CD8-positive, alpha-beta memory T cell (primary cell): ENCODE measurements at regions of chr11 and their contacts with region 1.

Region 1: DNA sequence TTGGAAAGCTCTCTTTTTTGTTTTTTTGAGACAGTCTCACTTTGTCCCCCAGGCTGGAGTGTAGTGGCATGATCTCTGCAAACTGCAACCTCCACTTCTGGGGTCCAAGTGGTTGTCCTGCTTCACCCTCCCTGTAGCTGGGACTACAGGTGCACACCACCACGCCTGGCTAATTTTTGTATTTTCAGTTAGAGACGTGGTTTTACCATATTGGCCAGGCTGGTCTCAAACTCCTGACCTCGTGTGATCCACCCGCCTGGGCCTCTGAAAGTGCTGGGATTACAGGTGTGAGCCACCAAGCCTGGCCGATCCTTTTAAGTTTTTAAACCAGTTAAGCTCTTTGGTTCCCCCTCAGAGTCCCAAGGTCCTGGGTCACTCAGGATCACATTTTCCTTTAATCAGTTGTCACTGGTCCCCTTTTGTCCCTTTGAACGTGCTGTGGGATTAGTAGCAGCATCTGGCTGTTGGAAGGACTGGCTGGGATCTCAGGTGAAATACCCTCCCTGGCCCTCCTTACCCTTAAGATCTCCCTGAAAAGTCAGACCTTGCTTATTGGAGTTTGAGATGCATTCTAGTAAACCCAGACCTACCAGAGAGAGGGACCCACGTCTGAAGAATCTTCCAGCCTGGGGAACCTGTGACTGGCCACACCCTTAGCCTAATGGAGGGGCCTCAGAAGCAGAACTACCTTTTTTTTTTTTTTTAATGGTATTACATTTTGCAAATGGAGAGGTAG is 8.1 kb downstream of the MALAT1 start:
- DNase-seq: peak in 2 of 5 donors; percentile 30 to 58
- H3K4me3 ChIP-seq: peak overlapping the region; percentile 97
- H3K4me3 Mint-ChIP-seq: peak overlapping the region in 1 of 7 donors; percentile 59
- H3K27ac ChIP-seq: peak overlapping the region; percentile 50
- H3K27ac Mint-ChIP-seq: peak overlapping the region in 7 of 8 donors; percentile 65 to 92 (median 86)
- H3K4me1 ChIP-seq: peaks cover 43% of the 10 kb centered on the region
- H3K4me1 Mint-ChIP-seq: peaks cover 52 to 56% (median 53%) of the 10 kb centered on the region in 3 donors
- H3K27me3 ChIP-seq: no peaks in the 10 kb centered on the region
- H3K27me3 Mint-ChIP-seq: no peaks in the 10 kb centered on the region

Region 2: DNA sequence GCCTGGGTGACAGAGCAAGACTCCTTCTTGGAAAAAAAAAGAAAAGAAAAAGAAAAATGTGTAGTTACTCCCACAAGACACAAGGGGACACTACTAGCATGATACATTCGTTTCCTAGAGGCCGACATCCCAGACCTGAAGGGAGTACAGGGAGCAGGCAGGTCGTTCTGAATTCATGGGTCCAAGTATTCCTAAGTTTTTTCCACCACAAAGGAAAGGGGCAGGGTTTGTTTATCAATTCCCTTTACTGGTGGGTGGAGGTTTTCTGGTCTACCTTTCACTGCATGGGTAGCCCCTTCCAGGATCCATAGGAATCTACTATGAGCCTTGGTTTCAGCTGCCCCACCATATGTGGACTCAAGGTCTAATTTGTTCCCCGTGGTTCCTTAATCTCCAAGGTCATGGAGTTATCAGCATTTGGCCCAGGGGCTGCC is 140.6 kb before region 1 on chr11:
- CTCF ChIA-PET with region 1: interaction called, 18 read pairs
- POLR2A ChIA-PET with region 1: no interaction called
- DNase-seq: peak in 4 of 5 donors; percentile 22 to 61 (median 60)
- H3K4me3 ChIP-seq: no peak overlapping the region
- H3K4me3 Mint-ChIP-seq: no peak overlapping the region
- H3K27ac ChIP-seq: no peak overlapping the region
- H3K27ac Mint-ChIP-seq: no peak overlapping the region
- H3K4me1 ChIP-seq: no peaks in the 10 kb centered on the region
- H3K4me1 Mint-ChIP-seq: peaks cover 0 to 7% (median 0%) of the 10 kb centered on the region in 3 donors
- H3K27me3 ChIP-seq: no peaks in the 10 kb centered on the region
- H3K27me3 Mint-ChIP-seq: no peaks in the 10 kb centered on the region

Region 3: DNA sequence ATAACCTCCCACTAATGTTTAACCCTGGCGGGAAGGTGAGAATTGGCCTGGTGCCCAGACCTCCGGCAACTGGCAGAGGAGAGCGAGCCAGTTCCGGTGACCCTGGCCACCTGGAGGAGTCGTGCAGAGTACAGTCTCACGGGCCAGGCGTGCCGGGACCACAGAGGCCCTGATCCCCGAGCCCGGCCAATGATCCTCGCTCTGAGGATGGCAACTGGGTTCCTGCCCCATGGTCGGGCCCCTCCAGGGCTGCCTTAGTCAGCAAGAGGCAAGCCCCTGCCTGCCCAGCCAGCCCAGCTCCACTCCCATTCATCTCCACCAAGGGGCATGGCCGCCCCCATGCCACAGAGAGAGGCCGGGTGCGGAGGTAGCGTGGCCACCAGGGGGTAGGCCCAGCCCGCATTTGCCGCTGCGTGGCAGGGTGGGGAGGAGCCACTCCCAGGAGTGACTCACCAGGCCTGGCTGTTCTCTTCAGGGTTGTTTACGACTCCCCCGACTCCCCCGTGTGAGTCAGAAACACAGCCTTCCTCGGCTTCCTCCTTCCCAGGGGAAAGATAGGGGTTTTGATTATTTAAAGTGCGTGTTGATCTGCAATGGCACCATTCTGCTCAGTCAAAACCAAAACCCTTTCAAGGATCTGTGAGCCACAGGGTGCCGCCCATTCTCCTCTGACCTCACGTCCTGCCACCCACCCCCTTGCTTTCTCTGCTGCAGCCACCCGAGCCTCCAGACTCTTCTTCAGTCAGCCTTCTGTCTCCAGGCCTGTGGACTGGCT is 124.7 kb before region 1 on chr11 and contains the start of gene SLC25A45:
- CTCF ChIA-PET with region 1: interaction called, 51 read pairs
- POLR2A ChIA-PET with region 1: interaction called, 10 read pairs
- DNase-seq: peak; percentile 84 to 96 (median 87)
- H3K4me3 ChIP-seq: peak within 1 kb of the TSS; percentile 91
- H3K4me3 Mint-ChIP-seq: peak within 1 kb of the TSS; percentile 83 to 94 (median 91)
- H3K27ac ChIP-seq: peak within 1 kb of the TSS; percentile 96
- H3K27ac Mint-ChIP-seq: peak within 1 kb of the TSS; percentile 97 to 100 (median 99)
- H3K4me1 ChIP-seq: peaks cover 54% of the 10 kb centered on the region
- H3K4me1 Mint-ChIP-seq: peaks cover 45 to 61% (median 47%) of the 10 kb centered on the region in 3 donors
- H3K27me3 ChIP-seq: no peaks in the 10 kb centered on the region
- H3K27me3 Mint-ChIP-seq: no peaks in the 10 kb centered on the region
- total RNA-seq, gene SLC25A45: 13.3 to 13.8 TPM

Region 4: DNA sequence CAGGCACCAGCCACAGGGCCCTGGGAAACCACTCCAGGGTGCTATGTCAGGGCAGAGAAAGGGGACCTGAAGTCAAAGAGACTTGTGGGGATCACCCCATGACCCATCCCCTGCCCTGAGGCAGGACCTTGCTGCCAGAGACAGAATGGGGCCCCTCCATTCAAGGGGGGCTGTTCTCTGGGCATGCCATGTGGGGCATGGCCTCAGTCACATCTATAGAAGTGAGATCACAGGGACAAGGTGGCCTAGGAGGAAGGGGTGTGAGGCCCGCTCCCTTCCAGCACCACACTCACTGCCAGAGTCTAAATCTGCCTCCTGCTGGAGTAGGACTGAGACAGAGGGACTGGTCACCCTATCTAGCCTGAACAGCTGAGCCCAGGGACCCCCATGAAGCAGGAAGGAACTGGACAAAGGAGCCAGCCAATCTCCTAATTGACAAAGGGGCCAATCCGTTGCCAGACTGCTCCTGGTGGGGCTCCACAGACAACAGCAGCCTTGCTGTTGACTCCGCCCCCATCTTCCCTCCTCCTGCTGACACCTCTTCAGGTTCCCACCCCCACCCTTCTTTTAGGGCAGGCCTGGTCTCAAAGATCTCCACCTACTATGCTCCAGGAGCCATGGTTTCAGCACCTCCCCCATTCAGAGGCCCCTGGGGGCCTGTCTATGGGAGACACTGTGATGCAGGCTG is 58.4 kb before region 1 on chr11:
- CTCF ChIA-PET with region 1: no interaction called
- POLR2A ChIA-PET with region 1: no interaction called
- DNase-seq: peak in 1 of 5 donors; percentile 33
- H3K4me3 ChIP-seq: no peak overlapping the region
- H3K4me3 Mint-ChIP-seq: no peak overlapping the region
- H3K27ac ChIP-seq: no peak overlapping the region
- H3K27ac Mint-ChIP-seq: peak overlapping the region in 6 of 8 donors; percentile 42 to 96 (median 51)
- H3K4me1 ChIP-seq: no peaks in the 10 kb centered on the region
- H3K4me1 Mint-ChIP-seq: peaks cover 7 to 14% (median 14%) of the 10 kb centered on the region in 3 donors
- H3K27me3 ChIP-seq: no peaks in the 10 kb centered on the region
- H3K27me3 Mint-ChIP-seq: no peaks in the 10 kb centered on the region

Region 5: DNA sequence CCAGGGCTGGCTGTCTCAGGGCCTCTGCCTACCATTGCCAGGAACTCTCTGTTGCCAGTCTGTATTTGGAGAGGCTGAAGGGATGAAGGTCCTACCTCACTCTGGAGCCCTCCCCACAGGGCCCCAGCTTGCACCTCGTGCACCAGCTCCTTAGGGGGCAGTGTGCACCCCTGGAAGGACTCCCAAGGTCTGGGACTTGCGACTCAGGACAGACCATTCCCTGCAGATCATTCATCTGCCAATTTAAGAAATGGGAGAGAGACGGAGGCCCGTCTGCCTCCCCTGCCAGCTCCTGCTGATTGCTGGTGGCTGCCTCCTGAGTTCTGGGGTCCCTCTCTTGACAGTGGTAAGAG is 35.6 kb before region 1 on chr11:
- CTCF ChIA-PET with region 1: interaction called, 11 read pairs
- POLR2A ChIA-PET with region 1: interaction called, 48 read pairs
- DNase-seq: peak in 1 of 5 donors; percentile 21
- H3K4me3 ChIP-seq: peak overlapping the region; percentile 25
- H3K4me3 Mint-ChIP-seq: peak overlapping the region in 1 of 7 donors; percentile 73
- H3K27ac ChIP-seq: peak overlapping the region; percentile 73
- H3K27ac Mint-ChIP-seq: peak overlapping the region; percentile 96 to 99 (median 98)
- H3K4me1 ChIP-seq: peaks cover 21% of the 10 kb centered on the region
- H3K4me1 Mint-ChIP-seq: peaks cover 16 to 33% (median 20%) of the 10 kb centered on the region in 3 donors
- H3K27me3 ChIP-seq: no peaks in the 10 kb centered on the region
- H3K27me3 Mint-ChIP-seq: no peaks in the 10 kb centered on the region

Region 6: DNA sequence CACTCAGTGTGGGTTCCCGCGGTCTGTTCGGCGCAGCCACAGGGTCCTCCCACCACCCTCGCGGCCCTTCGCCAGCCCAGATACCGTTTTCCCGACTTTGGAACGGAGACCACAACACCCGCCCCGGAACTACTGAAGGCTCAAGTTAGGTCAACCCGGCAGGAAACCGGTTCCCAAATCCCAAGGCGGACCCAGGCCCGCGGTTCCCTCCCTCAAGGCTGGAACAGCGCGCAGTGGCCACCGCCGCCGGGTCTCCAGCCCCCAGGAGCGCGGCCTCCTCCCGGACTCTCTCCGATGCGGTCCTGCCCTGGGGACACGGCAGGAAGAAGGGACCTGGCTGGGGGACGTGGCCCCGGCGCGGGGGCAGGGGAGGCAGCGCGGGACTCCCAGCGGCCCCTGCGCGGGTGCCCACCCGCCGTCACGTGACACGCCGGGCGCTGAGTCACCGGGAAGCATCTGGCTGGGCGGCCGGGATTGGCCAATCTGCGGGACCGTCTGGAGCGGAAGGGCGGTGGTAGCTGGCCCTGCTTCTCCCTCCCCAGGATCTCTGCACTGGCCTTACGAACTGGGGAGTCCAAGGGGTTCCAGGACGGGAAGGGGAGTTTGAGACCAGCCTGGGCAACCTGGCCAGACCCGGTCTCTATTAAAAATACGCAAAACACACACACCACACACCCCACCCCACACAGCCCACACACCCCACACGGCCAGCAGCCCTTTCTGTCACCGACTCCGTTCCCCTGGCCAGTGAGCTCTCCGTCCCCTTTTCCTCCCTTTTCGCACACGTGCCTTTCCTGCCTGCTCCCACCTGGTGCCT is 29.6 kb before region 1 on chr11:
- CTCF ChIA-PET with region 1: interaction called, 11 read pairs
- POLR2A ChIA-PET with region 1: interaction called, 48 read pairs
- DNase-seq: peak; percentile 82 to 94 (median 86)
- H3K4me3 ChIP-seq: peak overlapping the region; percentile 86
- H3K4me3 Mint-ChIP-seq: peak overlapping the region; percentile 90 to 100 (median 97)
- H3K27ac ChIP-seq: peak overlapping the region; percentile 98
- H3K27ac Mint-ChIP-seq: peak overlapping the region; percentile 96 to 100 (median 100)
- H3K4me1 ChIP-seq: peaks cover 12% of the 10 kb centered on the region
- H3K4me1 Mint-ChIP-seq: peaks cover 12 to 27% (median 14%) of the 10 kb centered on the region in 3 donors
- H3K27me3 ChIP-seq: no peaks in the 10 kb centered on the region
- H3K27me3 Mint-ChIP-seq: no peaks in the 10 kb centered on the region

Region 7: GRCh38 chr11:65487413-65488272 is 19.3 kb before region 1 on chr11:
- CTCF ChIA-PET with region 1: interaction called, 3 read pairs
- POLR2A ChIA-PET with region 1: interaction called, 10 read pairs
- DNase-seq: no peak
- H3K4me3 ChIP-seq: no peak overlapping the region
- H3K4me3 Mint-ChIP-seq: no peak overlapping the region
- H3K27ac ChIP-seq: no peak overlapping the region
- H3K27ac Mint-ChIP-seq: peak overlapping the region in 1 of 8 donors; percentile 29
- H3K4me1 ChIP-seq: no peaks in the 10 kb centered on the region
- H3K4me1 Mint-ChIP-seq: peaks cover 0 to 3% (median 2%) of the 10 kb centered on the region in 3 donors
- H3K27me3 ChIP-seq: no peaks in the 10 kb centered on the region
- H3K27me3 Mint-ChIP-seq: peaks cover 0 to 3% of the 10 kb centered on the region in 2 donors

Region 8: GRCh38 chr11:65524741-65525545 is 18.0 kb after region 1 on chr11 and contains the start of gene SCYL1:
- CTCF ChIA-PET with region 1: interaction called, 10 read pairs
- POLR2A ChIA-PET with region 1: interaction called, 13 read pairs
- DNase-seq: peak; percentile 72 to 88 (median 76)
- H3K4me3 ChIP-seq: peak within 1 kb of the TSS; percentile 75
- H3K4me3 Mint-ChIP-seq: peak within 1 kb of the TSS; percentile 81 to 91 (median 85)
- H3K27ac ChIP-seq: peak within 1 kb of the TSS; percentile 76
- H3K27ac Mint-ChIP-seq: peak within 1 kb of the TSS; percentile 73 to 97 (median 92)
- H3K4me1 ChIP-seq: peaks cover 52% of the 10 kb centered on the region
- H3K4me1 Mint-ChIP-seq: peaks cover 45 to 62% (median 46%) of the 10 kb centered on the region in 3 donors
- H3K27me3 ChIP-seq: no peaks in the 10 kb centered on the region
- H3K27me3 Mint-ChIP-seq: peaks cover 0 to 1% of the 10 kb centered on the region in 2 donors
- total RNA-seq, gene SCYL1: 85.1 to 88.5 TPM

Region 9: GRCh38 chr11:65558002-65558931 is 51.3 kb after region 1 on chr11 and contains the start of gene LTBP3:
- CTCF ChIA-PET with region 1: no interaction called
- POLR2A ChIA-PET with region 1: no interaction called
- DNase-seq: peak in 4 of 5 donors; percentile 32 to 63 (median 40)
- H3K4me3 ChIP-seq: peak within 1 kb of the TSS; percentile 53
- H3K4me3 Mint-ChIP-seq: peak within 1 kb of the TSS; percentile 80 to 94 (median 91)
- H3K27ac ChIP-seq: peak within 1 kb of the TSS; percentile 54
- H3K27ac Mint-ChIP-seq: peak within 1 kb of the TSS; percentile 84 to 97 (median 94)
- H3K4me1 ChIP-seq: peaks cover 59% of the 10 kb centered on the region
- H3K4me1 Mint-ChIP-seq: peaks cover 37 to 62% (median 44%) of the 10 kb centered on the region in 3 donors
- H3K27me3 ChIP-seq: no peaks in the 10 kb centered on the region
- H3K27me3 Mint-ChIP-seq: peaks cover 0 to 3% of the 10 kb centered on the region in 2 donors
- total RNA-seq, gene LTBP3: 33.2 to 35.4 TPM